A549 (cell line): ENCODE measurements at regions of chr10 and their contacts with region 1.

Region 1: DNA sequence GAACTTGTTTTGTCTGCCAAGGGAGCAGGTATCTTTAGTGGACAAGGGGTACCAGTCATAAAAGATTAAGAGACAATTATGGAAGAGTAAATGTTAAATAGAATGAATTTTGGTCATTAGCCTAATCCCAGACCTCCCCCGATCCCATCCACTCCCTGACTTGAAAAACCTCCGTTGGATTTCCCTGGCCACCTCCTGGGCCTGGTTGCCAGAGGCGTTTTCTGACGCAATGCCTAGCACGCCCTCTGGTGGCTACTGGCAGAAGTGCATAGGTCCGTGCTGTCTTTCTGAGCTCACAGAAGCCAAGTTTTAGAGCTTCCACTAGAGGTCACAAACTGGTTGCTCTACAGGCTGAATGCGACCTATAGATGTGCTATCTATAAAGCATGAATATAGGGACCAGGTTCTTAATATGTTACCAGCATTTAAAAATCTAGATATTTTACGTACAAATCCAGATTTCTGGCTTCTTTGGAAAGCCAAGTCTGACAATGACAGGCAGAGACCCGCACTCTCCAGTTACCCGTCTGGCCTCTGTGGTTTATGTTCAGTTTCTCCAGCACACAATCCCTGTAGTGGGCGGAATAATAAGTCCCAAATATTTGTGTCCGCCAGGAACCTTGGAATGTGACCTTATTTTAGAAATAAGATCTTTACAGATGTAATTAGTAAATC is 39.8 kb downstream of the SPOCK2 start:
- DNase-seq: peak; percentile 92 to 94
- ATAC-seq: peak; percentile 90 to 92
- H3K4me3 ChIP-seq: no peak overlapping the region
- H3K27ac ChIP-seq: peak overlapping the region; percentile 68 to 72
- H3K4me1 ChIP-seq: peaks cover 3% of the 10 kb centered on the region; the same call in 1 of the 3 replicates
- CTCF ChIP-seq: peak; percentile 100
- EP300 ChIP-seq: no peak
- POLR2A ChIP-seq: no peak
- RAD21 ChIP-seq: peak; percentile 98 to 99

Region 2: GRCh38 chr10:71302874-71303568 is 745.6 kb before region 1 on chr10:
- CTCF ChIA-PET with region 1: no interaction called
- POLR2A ChIA-PET with region 1: no interaction called
- DNase-seq: peak; percentile 73
- ATAC-seq: peak; percentile 75 to 90
- H3K4me3 ChIP-seq: no peak overlapping the region
- H3K27ac ChIP-seq: no peak overlapping the region
- H3K4me1 ChIP-seq: no peaks in the 10 kb centered on the region
- CTCF ChIP-seq: peak; percentile 56
- EP300 ChIP-seq: no peak
- POLR2A ChIP-seq: no peak
- RAD21 ChIP-seq: peak; percentile 37 to 52; a peak in 4 of 5 replicates

Region 3: DNA sequence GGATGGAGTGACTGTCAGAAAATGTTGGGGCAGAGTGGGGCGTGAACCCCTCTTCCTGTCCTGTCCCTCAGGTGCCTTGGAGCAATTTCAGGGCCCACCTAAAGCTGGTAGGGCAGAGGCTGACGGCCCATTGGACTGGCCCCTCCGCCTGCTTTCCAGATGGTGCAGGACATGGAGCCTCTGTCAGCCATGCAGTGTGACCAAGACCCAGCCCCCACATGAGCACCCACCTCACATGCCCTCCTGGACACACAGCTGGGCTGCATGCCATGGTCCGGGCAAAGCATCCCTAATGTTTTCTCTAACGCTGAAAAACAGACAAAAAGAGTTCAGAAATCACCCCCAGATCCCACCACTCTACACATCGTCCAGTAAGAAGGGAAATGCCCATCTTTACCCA is 146.2 kb before region 1 on chr10:
- CTCF ChIA-PET with region 1: interaction called, 141 read pairs
- POLR2A ChIA-PET with region 1: no interaction called
- DNase-seq: no peak
- ATAC-seq: no peak
- H3K4me3 ChIP-seq: no peak overlapping the region
- H3K27ac ChIP-seq: no peak overlapping the region
- H3K4me1 ChIP-seq: no peaks in the 10 kb centered on the region
- CTCF ChIP-seq: no peak
- EP300 ChIP-seq: no peak
- POLR2A ChIP-seq: no peak
- RAD21 ChIP-seq: no peak

Region 4: GRCh38 chr10:71963756-71964668 is 84.6 kb before region 1 on chr10 and contains the start of gene CHST3:
- CTCF ChIA-PET with region 1: interaction called, 16 read pairs
- POLR2A ChIA-PET with region 1: no interaction called
- DNase-seq: peak in 1 of 2 experiments; percentile 32
- ATAC-seq: peak; percentile 70 to 75
- H3K4me3 ChIP-seq: peak within 1 kb of the TSS; percentile 77
- H3K27ac ChIP-seq: peak within 1 kb of the TSS; percentile 92 to 98
- H3K4me1 ChIP-seq: peaks cover 40% of the 10 kb centered on the region
- CTCF ChIP-seq: peak; percentile 11; the same call in 1 of the 3 replicates
- EP300 ChIP-seq: no peak
- POLR2A ChIP-seq: peak; percentile 36
- RAD21 ChIP-seq: no peak
- polyA plus RNA-seq, gene CHST3: 12.8 and 13.8 TPM in 2 replicates

Region 5: GRCh38 chr10:71999360-72000072 is 49.1 kb before region 1 on chr10:
- CTCF ChIA-PET with region 1: interaction called, 42 read pairs
- POLR2A ChIA-PET with region 1: no interaction called
- DNase-seq: no peak
- ATAC-seq: peak; percentile 5 to 27; a peak in 3 of 6 replicates
- H3K4me3 ChIP-seq: no peak overlapping the region
- H3K27ac ChIP-seq: peak overlapping the region; percentile 32 to 82; a peak in 5 of 6 replicates
- H3K4me1 ChIP-seq: peaks cover 37% of the 10 kb centered on the region
- CTCF ChIP-seq: no peak
- EP300 ChIP-seq: no peak
- POLR2A ChIP-seq: no peak
- RAD21 ChIP-seq: no peak

Region 6: GRCh38 chr10:72038458-72039001 is 10.1 kb before region 1 on chr10:
- CTCF ChIA-PET with region 1: interaction called, 72 read pairs
- POLR2A ChIA-PET with region 1: no interaction called
- DNase-seq: no peak
- ATAC-seq: no peak
- H3K4me3 ChIP-seq: no peak overlapping the region
- H3K27ac ChIP-seq: 0 out of 6 replicates have a peak overlapping the region, but pooled peaks of 1 of the 2 experiments have one; percentile 42
- H3K4me1 ChIP-seq: peaks cover 18% of the 10 kb centered on the region
- CTCF ChIP-seq: no peak
- EP300 ChIP-seq: no peak
- POLR2A ChIP-seq: no peak
- RAD21 ChIP-seq: no peak

Region 7: DNA sequence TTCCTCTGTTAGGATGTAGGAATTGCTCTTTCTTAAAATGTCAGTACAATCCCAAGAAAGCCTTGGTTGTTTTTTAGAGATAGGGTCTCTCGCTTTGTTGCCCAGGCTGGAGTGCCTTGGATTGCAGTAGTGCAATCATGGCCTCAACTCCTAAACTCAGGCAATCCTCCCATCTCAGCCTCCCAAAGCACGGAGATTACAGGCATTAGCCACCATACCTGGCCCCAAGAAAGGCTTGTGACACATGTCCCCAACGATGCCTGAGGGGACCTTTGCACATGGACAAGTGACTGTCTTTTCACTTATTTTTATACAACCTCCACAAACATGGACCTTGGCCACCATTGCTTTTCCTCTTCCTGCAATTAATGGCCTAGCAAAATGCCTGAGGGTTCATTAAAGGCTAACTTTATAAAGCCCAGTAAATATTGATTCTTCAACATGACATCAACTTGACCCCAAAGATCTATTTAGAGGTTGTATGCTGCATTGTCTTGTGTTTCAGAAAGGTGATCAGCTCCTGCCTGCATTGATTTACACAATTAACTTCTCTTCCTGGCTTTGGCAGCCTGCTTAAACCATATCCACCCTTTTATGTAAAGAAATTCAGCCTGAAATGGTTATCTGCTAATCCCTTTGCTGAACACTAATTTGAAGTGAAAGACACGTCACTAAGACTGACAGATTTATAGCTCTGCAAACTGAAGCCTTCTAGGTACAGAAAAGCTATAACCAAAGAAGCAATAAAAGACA is 49.9 kb after region 1 on chr10:
- CTCF ChIA-PET with region 1: interaction called, 12 read pairs
- POLR2A ChIA-PET with region 1: no interaction called
- DNase-seq: no peak
- ATAC-seq: 0 out of 6 replicates have a peak, but pooled peaks of 1 of the 2 experiments have one; percentile 4
- H3K4me3 ChIP-seq: no peak overlapping the region
- H3K27ac ChIP-seq: peak overlapping the region; percentile 69 to 71
- H3K4me1 ChIP-seq: peaks cover 48% of the 10 kb centered on the region
- CTCF ChIP-seq: no peak
- EP300 ChIP-seq: no peak
- POLR2A ChIP-seq: no peak
- RAD21 ChIP-seq: no peak

Region 8: DNA sequence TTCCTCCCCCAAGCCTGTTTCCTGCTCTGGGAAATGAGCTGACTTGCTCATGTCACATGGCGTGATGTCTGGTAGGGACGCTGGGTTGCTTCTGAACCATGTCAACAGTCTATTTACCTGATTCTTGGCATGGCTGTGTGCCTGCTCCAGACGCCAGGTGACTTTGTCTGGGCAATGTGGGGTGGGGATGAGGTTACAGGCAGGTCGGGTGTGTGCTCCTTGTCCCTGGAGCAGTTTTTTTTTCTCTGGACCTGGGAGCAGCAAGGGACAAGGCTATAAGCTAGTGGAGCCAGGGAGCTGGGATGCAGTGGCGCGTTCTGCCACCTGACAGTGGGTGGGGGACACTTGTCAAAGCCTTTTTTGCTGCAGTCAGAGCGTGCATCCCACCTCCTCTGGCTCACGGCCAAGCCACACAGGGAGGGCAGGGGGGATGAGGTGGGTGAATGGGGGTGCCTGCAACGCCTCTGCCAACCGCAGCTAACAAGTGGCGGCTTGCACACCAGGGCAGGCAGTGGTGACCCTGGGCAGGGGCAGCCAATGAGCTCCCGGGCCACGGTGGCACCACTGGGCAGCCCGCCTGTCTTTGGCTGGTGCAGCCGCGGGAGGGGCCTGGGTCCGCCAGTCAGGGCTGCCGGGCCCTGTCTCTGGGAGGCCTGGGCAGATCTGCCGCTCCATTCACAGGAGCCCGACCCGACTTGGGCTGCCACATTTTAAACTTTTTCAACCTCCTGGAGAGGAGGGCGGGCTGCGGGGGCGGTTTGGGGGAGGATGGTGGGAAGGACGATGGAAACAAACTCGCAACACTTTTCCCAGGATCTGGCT is 283.2 kb after region 1 on chr10:
- CTCF ChIA-PET with region 1: interaction called, 14 read pairs
- POLR2A ChIA-PET with region 1: no interaction called
- DNase-seq: peak in 1 of 2 experiments; percentile 64
- ATAC-seq: peak in 1 of 2 experiments; percentile 34; a peak in 3 of 6 replicates
- H3K4me3 ChIP-seq: no peak overlapping the region
- H3K27ac ChIP-seq: peak overlapping the region; percentile 58 to 77
- H3K4me1 ChIP-seq: peaks cover 76% of the 10 kb centered on the region
- CTCF ChIP-seq: no peak
- EP300 ChIP-seq: no peak
- POLR2A ChIP-seq: no peak
- RAD21 ChIP-seq: no peak

Region 9: DNA sequence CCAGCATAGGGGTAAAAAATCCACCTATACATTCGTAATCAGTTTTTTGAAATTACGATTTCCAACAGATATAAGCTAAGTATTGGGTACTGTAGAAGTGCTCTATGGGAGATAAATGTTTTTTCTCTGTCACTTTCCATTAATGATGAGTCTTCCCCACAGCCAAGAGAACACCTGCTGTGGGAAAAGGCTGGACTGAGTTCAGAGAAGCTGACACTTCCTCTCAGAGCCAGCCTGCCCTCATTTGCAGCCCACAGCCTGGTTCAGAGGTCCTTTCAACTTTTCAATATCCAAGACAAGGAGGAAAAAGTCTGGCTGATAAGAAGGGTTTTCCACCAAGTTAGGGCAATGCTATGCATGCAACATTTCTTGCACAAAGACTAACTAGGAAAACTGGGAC is 370.7 kb after region 1 on chr10:
- CTCF ChIA-PET with region 1: no interaction called
- POLR2A ChIA-PET with region 1: no interaction called
- DNase-seq: no peak
- ATAC-seq: no peak
- H3K4me3 ChIP-seq: no peak overlapping the region
- H3K27ac ChIP-seq: no peak overlapping the region
- H3K4me1 ChIP-seq: no peaks in the 10 kb centered on the region
- CTCF ChIP-seq: no peak
- EP300 ChIP-seq: no peak
- POLR2A ChIP-seq: no peak
- RAD21 ChIP-seq: no peak